Activated CD8-positive, alpha-beta T cell treated with anti-CD3 and anti-CD28 coated beads for 36 hours (primary cell): ENCODE measurements at regions of chr19 and their contacts with region 1.

Region 1: GRCh38 chr19:34974646-34975045 is 10.6 kb upstream of the ZNF792 start:
- DNase-seq: no peak
- ATAC-seq: no peak
- H3K4me3 Mint-ChIP-seq: no peak overlapping the region
- H3K27ac Mint-ChIP-seq: no peak overlapping the region
- H3K4me1 Mint-ChIP-seq: peaks cover 24% of the 10 kb centered on the region
- H3K27me3 Mint-ChIP-seq: no peaks in the 10 kb centered on the region
- CTCF ChIP-seq: no peak

Region 2: DNA sequence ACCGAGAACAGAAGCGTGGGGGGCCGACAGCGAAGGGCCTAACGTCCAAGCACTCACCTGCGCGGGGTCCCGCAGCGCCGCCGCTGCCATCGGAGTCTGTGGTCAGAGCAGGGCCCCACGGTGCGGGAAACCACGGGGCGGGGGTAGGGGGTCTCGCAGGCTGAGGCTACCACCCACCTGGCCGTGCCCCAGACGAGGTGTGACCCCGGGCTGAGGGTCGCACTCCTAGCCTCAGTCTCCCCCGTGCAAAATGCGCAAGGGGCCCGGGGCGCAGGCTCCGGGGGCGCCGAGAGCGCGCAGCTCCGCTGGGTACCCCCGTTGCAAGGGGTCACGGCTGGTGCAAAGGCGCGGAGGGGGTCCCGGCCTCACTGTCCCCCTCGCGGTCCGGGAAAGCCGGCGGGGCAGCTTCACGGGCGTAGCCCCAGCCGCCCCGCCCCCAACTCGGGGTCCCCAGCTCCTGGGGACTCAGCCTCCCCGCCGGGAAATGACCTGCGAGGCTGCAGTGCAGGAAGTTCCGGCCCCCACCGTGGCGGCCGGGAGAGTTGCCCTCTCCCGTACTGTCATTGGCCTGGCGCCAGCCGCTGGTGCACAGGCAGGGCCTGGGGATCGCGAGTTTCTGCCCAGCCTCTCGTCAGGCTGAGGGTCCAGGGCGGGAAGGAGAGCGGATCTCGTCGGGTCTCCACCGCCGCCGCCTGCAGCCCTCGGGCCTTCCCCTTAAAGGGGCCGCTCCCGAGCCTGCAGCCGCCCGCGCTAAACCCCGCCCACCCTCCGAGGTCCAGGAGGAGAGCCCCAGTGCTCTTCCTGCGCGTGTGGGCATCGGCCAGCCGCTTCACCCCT is 10.9 kb before region 1 on chr19 and contains the start of gene ZNF792:
- CTCF ChIA-PET with region 1: interaction called, 17 read pairs
- POLR2A ChIA-PET with region 1: interaction called, 3 read pairs
- intact Hi-C with region 1: no loop called
- DNase-seq: peak; percentile 62
- ATAC-seq: peak; percentile 76
- H3K4me3 Mint-ChIP-seq: peak within 1 kb of the TSS; percentile 92
- H3K27ac Mint-ChIP-seq: peak within 1 kb of the TSS; percentile 88
- H3K4me1 Mint-ChIP-seq: peaks cover 23% of the 10 kb centered on the region
- H3K27me3 Mint-ChIP-seq: no peaks in the 10 kb centered on the region
- CTCF ChIP-seq: no peak
- total RNA-seq, gene ZNF792: 5.1 to 5.6 TPM

Region 3: GRCh38 chr19:34985249-34986022 is 10.8 kb after region 1 on chr19:
- CTCF ChIA-PET with region 1: interaction called, 14 read pairs
- POLR2A ChIA-PET with region 1: interaction called, 3 read pairs
- intact Hi-C with region 1: no loop called
- DNase-seq: peak; percentile 51
- ATAC-seq: peak; percentile 66
- H3K4me3 Mint-ChIP-seq: peak overlapping the region; percentile 57
- H3K27ac Mint-ChIP-seq: peak overlapping the region; percentile 89
- H3K4me1 Mint-ChIP-seq: peaks cover 37% of the 10 kb centered on the region
- H3K27me3 Mint-ChIP-seq: no peaks in the 10 kb centered on the region
- CTCF ChIP-seq: no peak

Region 4: GRCh38 chr19:34999498-35000341 is 25.1 kb after region 1 on chr19 and contains the start of gene GRAMD1A:
- CTCF ChIA-PET with region 1: interaction called, 18 read pairs
- POLR2A ChIA-PET with region 1: interaction called, 3 read pairs
- intact Hi-C with region 1: no loop called
- DNase-seq: peak; percentile 77
- ATAC-seq: peak; percentile 54
- H3K4me3 Mint-ChIP-seq: peak within 1 kb of the TSS; percentile 99
- H3K27ac Mint-ChIP-seq: peak within 1 kb of the TSS; percentile 97
- H3K4me1 Mint-ChIP-seq: peaks cover 56% of the 10 kb centered on the region
- H3K27me3 Mint-ChIP-seq: no peaks in the 10 kb centered on the region
- CTCF ChIP-seq: no peak
- total RNA-seq, gene GRAMD1A: 128 to 134 TPM